MCF 10A (cell line): ENCODE measurements at regions of chr6 and their contacts with region 1.

Region 1: GRCh38 chr6:53725791-53726431 is 60.4 kb upstream of the KLHL31 start:
- DNase-seq: peak; percentile 75
- H3K4me3 Mint-ChIP-seq: no peak overlapping the region
- H3K27ac Mint-ChIP-seq: no peak overlapping the region
- H3K4me1 Mint-ChIP-seq: peaks cover 15% of the 10 kb centered on the region
- H3K27me3 Mint-ChIP-seq: no peaks in the 10 kb centered on the region
- CTCF ChIP-seq: peak; percentile 93

Region 2: DNA sequence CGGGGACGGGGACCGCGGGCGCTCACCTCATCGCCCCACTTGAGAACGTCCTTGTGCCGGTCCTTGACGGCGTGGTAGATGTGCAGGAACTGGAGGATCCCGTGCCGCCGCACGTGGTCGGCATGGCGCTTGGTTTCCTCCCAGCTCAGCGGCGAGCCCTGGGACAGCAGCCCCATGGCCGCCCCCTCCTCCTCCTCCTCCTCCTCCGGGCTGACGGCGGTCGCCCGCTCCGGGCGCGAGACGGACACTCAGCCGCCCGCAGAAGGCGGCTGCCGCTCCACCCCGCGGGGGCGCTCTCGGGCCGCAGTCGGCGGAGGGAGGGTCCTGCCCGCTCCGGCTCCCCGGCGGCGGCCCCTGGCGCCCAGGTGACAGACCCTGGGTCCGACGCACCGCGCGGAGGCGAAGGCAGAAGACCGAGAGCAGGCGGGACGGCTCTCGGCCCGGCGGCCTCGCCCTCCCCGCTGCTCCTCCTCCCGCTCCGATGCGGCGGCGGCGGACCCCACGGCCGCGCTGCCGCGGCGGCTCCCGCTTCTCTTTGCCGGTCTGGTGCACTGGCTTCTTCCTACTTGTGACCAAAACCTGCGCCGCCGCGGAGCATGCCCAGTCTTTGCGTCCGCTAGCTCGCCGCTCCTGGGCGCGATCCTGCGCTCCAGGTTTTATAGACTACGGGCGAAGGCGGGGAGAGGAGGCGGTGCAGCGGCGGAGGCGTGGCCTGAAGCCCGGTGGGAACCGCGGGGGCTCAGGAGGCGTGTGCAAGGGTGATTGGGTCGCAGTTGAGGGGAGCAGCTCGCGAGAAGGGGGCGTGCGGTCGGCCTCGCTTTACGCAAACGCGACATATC is 181.2 kb before region 1 on chr6 and contains the start of gene GCLC:
- CTCF ChIA-PET with region 1: no interaction called
- POLR2A ChIA-PET with region 1: no interaction called
- intact Hi-C with region 1: loop called (anchors 5 kb)
- DNase-seq: peak; percentile 96
- H3K4me3 Mint-ChIP-seq: peak within 1 kb of the TSS; percentile 93
- H3K27ac Mint-ChIP-seq: peak within 1 kb of the TSS; percentile 66
- H3K4me1 Mint-ChIP-seq: peaks cover 43% of the 10 kb centered on the region
- H3K27me3 Mint-ChIP-seq: no peaks in the 10 kb centered on the region
- CTCF ChIP-seq: peak; percentile 77
- total RNA-seq, gene GCLC: 74.8 and 108 TPM in 2 replicates

Region 3: GRCh38 chr6:53651764-53652401 is 74.0 kb before region 1 on chr6:
- CTCF ChIA-PET with region 1: interaction called, 21 read pairs
- POLR2A ChIA-PET with region 1: interaction called, 3 read pairs
- intact Hi-C with region 1: loop called (anchors 5 kb)
- DNase-seq: peak; percentile 86
- H3K4me3 Mint-ChIP-seq: peak overlapping the region; percentile 94
- H3K27ac Mint-ChIP-seq: peak overlapping the region; percentile 84
- H3K4me1 Mint-ChIP-seq: peaks cover 34% of the 10 kb centered on the region
- H3K27me3 Mint-ChIP-seq: no peaks in the 10 kb centered on the region
- CTCF ChIP-seq: peak; percentile 23

Region 4: GRCh38 chr6:53707108-53707897 is 18.6 kb before region 1 on chr6:
- CTCF ChIA-PET with region 1: interaction called, 19 read pairs
- POLR2A ChIA-PET with region 1: no interaction called
- intact Hi-C with region 1: no loop called
- DNase-seq: no peak
- H3K4me3 Mint-ChIP-seq: no peak overlapping the region
- H3K27ac Mint-ChIP-seq: no peak overlapping the region
- H3K4me1 Mint-ChIP-seq: no peaks in the 10 kb centered on the region
- H3K27me3 Mint-ChIP-seq: no peaks in the 10 kb centered on the region
- CTCF ChIP-seq: no peak

Region 5: DNA sequence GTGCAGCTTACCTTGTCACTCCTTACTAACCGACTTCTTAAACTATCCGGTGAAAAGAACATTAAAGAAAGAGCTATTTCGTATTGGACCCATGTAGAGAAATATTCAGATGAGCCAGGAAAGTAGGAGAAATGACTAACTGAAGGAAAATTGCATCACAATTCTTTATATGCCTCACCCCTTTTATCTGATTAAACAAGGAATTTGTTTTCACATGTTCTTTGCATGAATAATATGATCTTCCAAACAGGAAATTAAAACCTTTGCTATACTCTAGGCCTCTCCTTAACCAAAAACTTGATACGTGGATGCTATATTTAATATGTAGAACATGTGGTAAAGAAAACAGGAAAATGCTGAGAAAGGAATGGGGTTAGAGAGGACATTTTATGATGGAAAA is 26.9 kb after region 1 on chr6:
- CTCF ChIA-PET with region 1: interaction called, 14 read pairs
- POLR2A ChIA-PET with region 1: interaction called, 4 read pairs
- intact Hi-C with region 1: no loop called
- DNase-seq: peak; percentile 61
- H3K4me3 Mint-ChIP-seq: peak overlapping the region; percentile 16
- H3K27ac Mint-ChIP-seq: peak overlapping the region; percentile 98
- H3K4me1 Mint-ChIP-seq: peaks cover 21% of the 10 kb centered on the region
- H3K27me3 Mint-ChIP-seq: no peaks in the 10 kb centered on the region
- CTCF ChIP-seq: no peak

Region 6: DNA sequence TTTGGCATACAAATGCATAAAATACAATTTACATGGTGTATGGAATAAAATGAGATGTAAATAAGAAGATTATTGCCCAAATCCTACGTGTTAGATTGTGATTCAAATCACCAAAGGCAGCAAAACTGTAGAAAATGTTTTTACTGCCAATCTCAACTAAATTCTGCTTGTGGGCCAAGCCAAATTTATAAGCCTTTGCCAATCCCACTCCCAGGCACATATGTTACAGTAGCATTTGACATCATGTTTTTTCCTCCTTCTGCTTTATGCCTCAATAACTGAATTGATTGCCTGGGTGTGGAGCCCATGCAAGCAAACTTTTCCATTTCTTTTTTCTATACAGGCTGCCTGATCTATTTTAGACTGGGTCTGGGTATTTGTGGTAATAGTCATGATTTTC is 32.6 kb after region 1 on chr6:
- CTCF ChIA-PET with region 1: interaction called, 10 read pairs
- POLR2A ChIA-PET with region 1: no interaction called
- intact Hi-C with region 1: no loop called
- DNase-seq: no peak
- H3K4me3 Mint-ChIP-seq: no peak overlapping the region
- H3K27ac Mint-ChIP-seq: no peak overlapping the region
- H3K4me1 Mint-ChIP-seq: peaks cover 5% of the 10 kb centered on the region
- H3K27me3 Mint-ChIP-seq: no peaks in the 10 kb centered on the region
- CTCF ChIP-seq: no peak

Region 7: DNA sequence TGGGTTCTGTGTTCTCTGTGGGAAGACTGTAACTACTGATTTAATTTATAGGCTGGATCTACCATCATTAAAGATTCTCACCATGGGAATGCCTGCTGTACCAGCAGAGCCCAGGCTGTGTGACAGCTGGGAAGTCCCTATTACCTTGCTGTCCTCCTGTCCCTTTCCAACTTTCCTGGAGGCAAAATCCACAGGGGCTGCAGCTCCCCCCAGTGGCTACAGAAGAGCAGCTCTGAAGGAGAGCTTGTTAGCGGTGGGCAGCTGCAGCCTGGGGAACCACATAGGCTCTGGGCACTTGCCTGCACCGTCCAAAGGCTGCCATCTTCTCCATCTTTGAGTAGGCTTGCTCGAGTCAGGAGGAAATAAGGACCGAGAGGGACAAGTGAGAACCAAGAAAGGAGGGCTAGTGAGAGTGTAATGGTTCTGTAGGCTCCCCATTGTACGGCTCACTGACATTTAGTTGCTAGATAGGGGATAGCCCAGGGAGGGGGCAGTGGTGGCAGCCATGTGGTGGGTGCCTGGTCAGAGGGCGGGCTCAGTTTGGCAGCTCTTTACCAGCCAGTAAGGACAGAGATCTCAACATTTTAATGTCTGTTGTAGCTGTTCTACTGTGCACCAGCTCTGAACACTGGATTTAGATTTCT is 230.3 kb after region 1 on chr6:
- CTCF ChIA-PET with region 1: interaction called, 68 read pairs
- POLR2A ChIA-PET with region 1: interaction called, 3 read pairs
- intact Hi-C with region 1: loop called (anchors 5 kb)
- DNase-seq: peak; percentile 70
- H3K4me3 Mint-ChIP-seq: no peak overlapping the region
- H3K27ac Mint-ChIP-seq: no peak overlapping the region
- H3K4me1 Mint-ChIP-seq: no peaks in the 10 kb centered on the region
- H3K27me3 Mint-ChIP-seq: no peaks in the 10 kb centered on the region
- CTCF ChIP-seq: peak; percentile 67